ENCODE measurements at regions of chr1 and their contacts with region 1.

Region 1: DNA sequence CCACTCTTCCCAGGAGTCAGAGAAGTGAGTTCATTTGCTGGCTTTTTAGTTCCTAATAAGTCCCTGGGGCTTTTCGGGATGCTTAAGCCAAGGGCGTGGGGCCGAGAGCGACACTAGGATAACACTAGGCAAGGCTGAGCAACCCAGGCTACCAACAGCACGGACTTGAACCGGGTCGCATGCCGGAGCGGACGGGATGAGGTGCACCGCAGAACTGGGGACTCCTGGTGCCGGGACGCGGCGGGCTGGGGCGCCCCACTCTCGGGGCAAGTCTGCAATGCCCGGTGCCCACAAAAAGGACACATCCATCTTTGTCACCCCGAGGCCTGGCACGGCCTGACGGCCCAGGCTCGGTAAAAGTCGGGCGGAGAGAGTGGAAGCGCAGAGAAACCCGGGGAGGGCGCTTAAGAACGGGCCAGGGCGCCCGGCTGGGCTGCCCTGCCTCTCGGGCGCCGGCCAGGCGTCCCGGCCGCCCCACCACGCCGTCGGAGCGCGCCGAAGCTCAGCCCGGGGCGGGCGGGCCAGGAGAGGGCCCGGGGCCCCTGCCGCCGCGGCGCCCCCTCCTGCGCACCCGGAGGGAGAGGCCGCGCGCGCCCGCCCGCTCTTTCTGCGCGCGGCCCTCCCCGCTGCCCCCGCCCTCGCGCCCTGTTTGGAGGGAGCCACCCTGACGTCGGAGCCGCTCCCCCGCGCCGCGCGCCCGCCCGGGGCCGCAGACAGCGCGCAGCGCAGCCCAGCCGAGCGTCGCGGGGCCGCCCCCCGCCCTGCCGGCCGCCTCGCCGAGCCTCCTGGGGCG is at the start of gene NBL1:
- DNase-seq: peak; percentile 74 to 87 (median 86)
- ATAC-seq: peak; percentile 38 to 84 (median 78)
- H3K4me3 ChIP-seq: peak within 1 kb of the TSS; percentile 24 to 98 (median 81)
- H3K27ac ChIP-seq: peak within 1 kb of the TSS; percentile 81 to 97 (median 92)
- H3K4me1 ChIP-seq: peaks cover 5 to 53% (median 31%) of the 10 kb centered on the region in 12 donors
- H3K27me3 ChIP-seq: peaks cover 0 to 29% (median 0%) of the 10 kb centered on the region in 9 donors
- CTCF ChIP-seq: peak in 1 of 12 donors; percentile 2
- POLR2A ChIP-seq: no peak
- total RNA-seq, gene NBL1: 19.3 to 61.4 (median 33.1) TPM

Region 2: GRCh38 chr1:19390901-19391595 is 252.8 kb before region 1 on chr1:
- intact Hi-C with region 1: loop called in 2 of 10 experiments (anchors 5 kb)
- DNase-seq: peak in 3 of 5 donors; percentile 59 to 70 (median 62)
- ATAC-seq: peak in 3 of 4 donors; percentile 19 to 55 (median 55)
- H3K4me3 ChIP-seq: peak overlapping the region in 8 of 12 donors; percentile 2 to 38 (median 26)
- H3K27ac ChIP-seq: peak overlapping the region; percentile 47 to 84 (median 72)
- H3K4me1 ChIP-seq: peaks cover 3 to 79% (median 51%) of the 10 kb centered on the region in 12 donors
- H3K27me3 ChIP-seq: no peaks in the 10 kb centered on the region
- CTCF ChIP-seq: peak; percentile 60 to 88 (median 74)
- POLR2A ChIP-seq: no peak

Region 3: GRCh38 chr1:19504796-19505692 is 138.8 kb before region 1 on chr1:
- intact Hi-C with region 1: loop called in 2 of 10 experiments (anchors 5 kb)
- DNase-seq: peak in 3 of 5 donors; percentile 30 to 48 (median 33)
- ATAC-seq: peak; percentile 79 to 89 (median 81)
- H3K4me3 ChIP-seq: peak overlapping the region in 4 of 12 donors; percentile 5 to 24 (median 18)
- H3K27ac ChIP-seq: peak overlapping the region; percentile 68 to 89 (median 81)
- H3K4me1 ChIP-seq: peaks cover 14 to 68% (median 37%) of the 10 kb centered on the region in 12 donors
- H3K27me3 ChIP-seq: no peaks in the 10 kb centered on the region
- CTCF ChIP-seq: no peak
- POLR2A ChIP-seq: no peak

Region 4: GRCh38 chr1:19563324-19564097 is 80.3 kb before region 1 on chr1:
- intact Hi-C with region 1: loop called in 1 of 10 experiments (anchors 10 kb)
- DNase-seq: peak; percentile 69 to 86 (median 81)
- ATAC-seq: peak; percentile 83 to 88 (median 86)
- H3K4me3 ChIP-seq: peak overlapping the region in 10 of 12 donors; percentile 6 to 48 (median 41)
- H3K27ac ChIP-seq: peak overlapping the region; percentile 29 to 89 (median 80)
- H3K4me1 ChIP-seq: peaks cover 3 to 30% (median 16%) of the 10 kb centered on the region in 12 donors
- H3K27me3 ChIP-seq: no peaks in the 10 kb centered on the region
- CTCF ChIP-seq: no peak
- POLR2A ChIP-seq: peak in 1 of 2 donors; percentile 26

Region 5: DNA sequence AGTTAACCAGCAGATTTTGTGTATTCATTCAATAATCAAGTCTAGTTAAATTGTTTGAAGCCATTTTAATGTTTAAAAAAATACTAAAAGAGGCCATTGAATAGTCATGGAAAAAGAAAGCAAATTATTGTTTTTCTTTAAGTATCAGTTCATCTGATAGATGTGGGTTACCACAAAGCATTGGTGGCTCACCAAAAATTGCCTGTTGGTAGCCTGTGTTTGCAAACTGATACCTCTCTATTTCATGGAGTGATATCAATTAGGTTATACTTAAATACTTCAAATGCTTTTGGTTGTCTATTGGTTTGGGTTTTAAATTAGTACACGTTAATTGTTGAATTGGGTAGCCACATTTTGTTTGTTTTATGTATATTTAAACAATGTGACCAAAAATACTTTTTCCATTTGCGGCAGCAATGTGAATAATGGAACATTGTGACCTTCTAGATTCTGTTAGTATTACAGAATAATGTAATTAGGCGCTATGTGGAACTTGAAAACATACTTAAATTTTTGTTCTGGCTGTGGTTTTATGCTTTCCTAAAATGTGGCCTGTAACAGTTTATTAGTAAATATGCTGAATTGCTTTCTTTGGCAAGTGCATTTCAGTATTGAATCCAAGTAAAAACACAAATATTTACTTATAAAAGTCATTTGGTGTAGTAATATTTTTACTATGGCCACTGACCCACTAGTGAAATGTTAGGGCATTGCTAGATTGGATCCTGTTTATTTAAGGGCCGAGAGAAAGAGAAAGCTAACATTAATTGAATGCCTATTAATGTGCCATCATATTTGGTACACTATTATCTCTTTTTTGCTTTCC is 36.8 kb before region 1 on chr1:
- intact Hi-C with region 1: loop called in 2 of 10 experiments (anchors 5 kb)
- DNase-seq: no peak
- ATAC-seq: no peak
- H3K4me3 ChIP-seq: no peak overlapping the region
- H3K27ac ChIP-seq: peak overlapping the region in 2 of 12 donors; percentile 9 to 44
- H3K4me1 ChIP-seq: peaks cover 6 to 70% (median 33%) of the 10 kb centered on the region in 12 donors
- H3K27me3 ChIP-seq: no peaks in the 10 kb centered on the region
- CTCF ChIP-seq: no peak
- POLR2A ChIP-seq: no peak

Region 6: DNA sequence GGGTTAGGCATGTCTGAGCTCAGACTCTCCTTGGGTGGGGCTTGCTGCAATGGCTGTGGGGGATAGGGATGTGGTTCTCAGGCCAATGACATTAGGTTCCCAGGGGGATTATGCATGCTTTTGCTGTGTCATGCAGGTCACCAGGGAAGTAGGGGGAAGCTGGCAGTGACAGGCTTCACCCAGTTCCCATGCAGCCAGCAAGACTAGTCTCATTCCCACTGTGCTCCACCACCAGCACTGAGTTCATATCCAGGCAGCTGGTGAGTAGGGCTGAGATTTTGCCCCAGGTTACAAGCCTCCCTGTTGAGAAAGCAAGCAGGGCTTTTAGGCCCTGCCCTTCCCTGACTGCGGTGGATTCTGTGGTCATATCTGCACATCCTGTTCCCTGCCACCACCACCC is 394.1 kb after region 1 on chr1:
- intact Hi-C with region 1: no loop called
- DNase-seq: no peak
- ATAC-seq: peak in 2 of 4 donors; percentile 18 to 32
- H3K4me3 ChIP-seq: no peak overlapping the region
- H3K27ac ChIP-seq: peak overlapping the region in 7 of 12 donors; percentile 2 to 50 (median 34)
- H3K4me1 ChIP-seq: peaks cover 0 to 10% (median 0%) of the 10 kb centered on the region in 12 donors
- H3K27me3 ChIP-seq: peaks cover 0 to 3% (median 0%) of the 10 kb centered on the region in 9 donors
- CTCF ChIP-seq: no peak
- POLR2A ChIP-seq: no peak